Activated CD4-positive, alpha-beta T cell treated with anti-CD3 and anti-CD28 coated beads, Interleukin-2, amount 10 ng/mL, durations not matched to agents 24 days and 14 days (primary cell): ENCODE measurements at regions of chr7 and their contacts with region 1.

Region 1: GRCh38 chr7:129054438-129055293 is at the start of gene TNPO3:
- DNase-seq: peak; percentile 97
- H3K4me3 Mint-ChIP-seq: peak within 1 kb of the TSS; percentile 96
- H3K27ac Mint-ChIP-seq: peak within 1 kb of the TSS; percentile 99
- H3K4me1 Mint-ChIP-seq: peaks cover 28% of the 10 kb centered on the region
- H3K27me3 Mint-ChIP-seq: peaks cover 9% of the 10 kb centered on the region
- total RNA-seq, gene TNPO3: 54.1 and 56.9 TPM in 2 replicates

Region 2: DNA sequence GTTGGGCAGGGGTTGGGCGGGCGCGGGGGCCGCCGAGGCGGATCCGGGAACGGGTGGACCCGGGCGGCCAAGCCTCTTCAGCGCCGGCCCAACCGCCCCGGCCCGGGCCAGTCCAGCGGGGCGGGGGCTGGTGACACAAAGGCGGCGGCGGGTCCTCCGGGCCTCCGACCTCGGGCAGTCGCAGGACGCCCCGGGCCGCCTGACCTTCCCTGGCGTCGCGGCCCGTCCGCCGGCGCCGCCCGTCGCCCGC is 523.9 kb before region 1 on chr7:
- intact Hi-C with region 1: loop called (anchors 10 kb)
- DNase-seq: no peak
- H3K4me3 Mint-ChIP-seq: peak overlapping the region; percentile 26
- H3K27ac Mint-ChIP-seq: no peak overlapping the region
- H3K4me1 Mint-ChIP-seq: peaks cover 25% of the 10 kb centered on the region
- H3K27me3 Mint-ChIP-seq: no peaks in the 10 kb centered on the region

Region 3: GRCh38 chr7:128937647-128938543 is 116.8 kb before region 1 on chr7 and contains the start of gene IRF5:
- intact Hi-C with region 1: loop called (anchors 1 kb)
- DNase-seq: peak; percentile 79
- H3K4me3 Mint-ChIP-seq: peak within 1 kb of the TSS; percentile 91
- H3K27ac Mint-ChIP-seq: peak within 1 kb of the TSS; percentile 85
- H3K4me1 Mint-ChIP-seq: peaks cover 37% of the 10 kb centered on the region
- H3K27me3 Mint-ChIP-seq: peaks cover 17% of the 10 kb centered on the region
- total RNA-seq, gene IRF5: 16.2 and 18.6 TPM in 2 replicates

Region 4: GRCh38 chr7:128963327-128963757 is 91.3 kb before region 1 on chr7:
- intact Hi-C with region 1: loop called (anchors 1 kb)
- DNase-seq: peak; percentile 76
- H3K4me3 Mint-ChIP-seq: peak overlapping the region; percentile 50
- H3K27ac Mint-ChIP-seq: peak overlapping the region; percentile 87
- H3K4me1 Mint-ChIP-seq: peaks cover 30% of the 10 kb centered on the region
- H3K27me3 Mint-ChIP-seq: no peaks in the 10 kb centered on the region

Region 5: GRCh38 chr7:129009437-129009836 is 45.2 kb before region 1 on chr7:
- intact Hi-C with region 1: loop called (anchors 1 kb)
- DNase-seq: no peak
- H3K4me3 Mint-ChIP-seq: no peak overlapping the region
- H3K27ac Mint-ChIP-seq: peak overlapping the region; percentile 19
- H3K4me1 Mint-ChIP-seq: peaks cover 27% of the 10 kb centered on the region
- H3K27me3 Mint-ChIP-seq: no peaks in the 10 kb centered on the region

Region 6: DNA sequence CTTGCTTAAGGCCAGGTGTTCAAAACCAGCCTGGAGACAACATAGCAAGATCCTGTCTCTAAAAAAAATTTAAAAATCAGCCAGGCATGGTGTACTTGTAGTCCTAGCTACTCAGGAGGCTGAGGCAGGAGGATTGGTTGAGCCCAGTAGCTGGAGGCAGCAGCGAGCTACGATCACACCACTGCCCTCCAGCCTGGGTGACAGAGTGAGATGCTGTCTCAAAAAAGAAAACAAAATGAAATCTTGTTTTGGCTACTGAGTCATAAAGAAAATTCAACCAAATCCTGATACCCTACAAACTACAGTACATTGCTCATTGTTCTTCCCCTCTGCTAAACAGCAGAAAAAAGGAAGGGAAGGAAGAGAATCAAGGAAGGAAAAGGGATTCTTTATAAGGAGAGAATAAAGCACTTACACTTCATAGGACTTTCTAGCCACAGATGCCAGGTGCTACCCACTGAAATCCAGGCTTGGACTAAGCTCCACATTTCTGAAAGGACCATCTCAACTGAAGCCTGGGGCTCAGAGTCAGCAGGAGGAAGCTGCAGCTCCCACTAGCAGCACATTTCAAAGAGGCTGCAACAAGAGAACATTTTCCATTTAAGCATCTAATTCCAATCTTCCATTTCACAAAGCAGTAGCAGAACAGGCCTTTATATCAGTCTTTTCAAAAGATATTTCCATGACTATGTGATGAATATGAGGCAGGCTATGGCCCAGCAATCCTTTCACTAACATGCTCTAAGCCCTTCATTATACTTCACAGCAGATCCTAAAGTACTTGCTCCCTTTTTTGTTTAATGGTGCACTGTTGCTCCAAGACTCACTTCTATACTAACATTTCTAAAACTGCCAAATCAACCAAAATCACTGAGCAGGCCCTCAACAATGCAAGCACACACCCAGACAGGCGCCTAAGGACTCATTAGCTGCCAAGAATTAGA is 13.3 kb before region 1 on chr7:
- intact Hi-C with region 1: loop called (anchors 1 kb)
- DNase-seq: no peak
- H3K4me3 Mint-ChIP-seq: no peak overlapping the region
- H3K27ac Mint-ChIP-seq: peak overlapping the region; percentile 63
- H3K4me1 Mint-ChIP-seq: peaks cover 29% of the 10 kb centered on the region
- H3K27me3 Mint-ChIP-seq: no peaks in the 10 kb centered on the region

Region 7: GRCh38 chr7:129091484-129092002 is 36.9 kb after region 1 on chr7:
- intact Hi-C with region 1: loop called (anchors 2 kb)
- DNase-seq: peak; percentile 97
- H3K4me3 Mint-ChIP-seq: no peak overlapping the region
- H3K27ac Mint-ChIP-seq: no peak overlapping the region
- H3K4me1 Mint-ChIP-seq: peaks cover 25% of the 10 kb centered on the region
- H3K27me3 Mint-ChIP-seq: peaks cover 2% of the 10 kb centered on the region